A549 (cell line): ENCODE measurements at regions of chr1 and their contacts with region 1.

Region 1: DNA sequence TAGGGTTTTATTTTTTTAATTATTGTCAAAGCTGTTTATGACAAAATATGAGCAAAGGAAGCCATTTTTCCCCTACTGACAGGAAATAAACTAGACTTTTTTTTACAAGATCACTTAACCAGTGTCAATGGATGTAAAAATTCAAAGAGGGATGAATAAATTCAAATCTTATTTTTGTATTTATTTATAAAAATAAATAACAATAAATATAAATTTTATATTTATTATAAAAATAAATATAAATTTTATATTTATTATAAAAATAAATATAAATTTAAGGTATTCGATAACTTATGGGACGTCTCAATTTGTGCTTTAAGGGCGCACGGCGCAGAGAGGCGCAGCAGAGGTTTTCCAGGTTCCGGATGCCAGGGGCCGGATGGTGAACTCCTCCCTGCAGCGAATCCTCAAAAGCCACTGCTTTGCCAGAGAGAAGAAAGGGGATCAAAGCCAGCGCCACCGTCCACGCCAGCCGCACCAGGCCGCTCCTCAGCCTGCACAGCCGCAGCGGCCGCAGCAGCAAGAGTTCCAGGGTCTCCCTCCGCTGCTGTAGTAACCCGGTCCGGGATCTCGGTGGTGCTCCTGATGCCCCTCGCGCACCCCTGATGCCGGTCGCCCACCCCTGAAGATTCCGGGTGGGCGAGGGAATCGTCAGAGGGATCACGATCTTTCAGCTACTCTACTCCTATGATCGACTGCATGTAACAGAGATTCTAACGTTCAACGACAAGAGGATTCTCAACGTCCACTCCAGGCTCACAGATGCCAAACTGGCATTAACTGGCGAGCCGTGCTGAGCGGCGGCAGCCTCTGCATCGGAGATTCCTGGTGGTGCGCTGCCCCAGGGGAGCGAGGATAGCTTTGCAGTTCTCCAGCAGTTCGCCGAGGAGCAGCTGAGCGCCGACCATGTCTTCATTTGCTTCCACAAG is 28.5 kb upstream of the RLF start:
- DNase-seq: no peak
- ATAC-seq: no peak
- H3K4me3 ChIP-seq: no peak overlapping the region
- H3K27ac ChIP-seq: no peak overlapping the region
- H3K4me1 ChIP-seq: no peaks in the 10 kb centered on the region
- CTCF ChIP-seq: no peak
- EP300 ChIP-seq: no peak
- POLR2A ChIP-seq: no peak
- RAD21 ChIP-seq: no peak

Region 2: GRCh38 chr1:40143891-40144575 is 11.4 kb after region 1 on chr1:
- CTCF ChIA-PET with region 1: interaction called, 17 read pairs
- POLR2A ChIA-PET with region 1: no interaction called
- DNase-seq: peak; percentile 36 to 65
- ATAC-seq: peak; percentile 87 to 89
- H3K4me3 ChIP-seq: no peak overlapping the region
- H3K27ac ChIP-seq: no peak overlapping the region
- H3K4me1 ChIP-seq: peaks cover 14% of the 10 kb centered on the region
- CTCF ChIP-seq: peak; percentile 70
- EP300 ChIP-seq: no peak
- POLR2A ChIP-seq: no peak
- RAD21 ChIP-seq: peak; percentile 73 to 74